ENCODE measurements at regions of chr15 and their contacts with region 1.

Region 1: GRCh38 chr15:89613031-89613430 is 37.8 kb downstream of the TICRR start:
- DNase-seq: no peak
- CTCF ChIP-seq: no peak

Region 2: DNA sequence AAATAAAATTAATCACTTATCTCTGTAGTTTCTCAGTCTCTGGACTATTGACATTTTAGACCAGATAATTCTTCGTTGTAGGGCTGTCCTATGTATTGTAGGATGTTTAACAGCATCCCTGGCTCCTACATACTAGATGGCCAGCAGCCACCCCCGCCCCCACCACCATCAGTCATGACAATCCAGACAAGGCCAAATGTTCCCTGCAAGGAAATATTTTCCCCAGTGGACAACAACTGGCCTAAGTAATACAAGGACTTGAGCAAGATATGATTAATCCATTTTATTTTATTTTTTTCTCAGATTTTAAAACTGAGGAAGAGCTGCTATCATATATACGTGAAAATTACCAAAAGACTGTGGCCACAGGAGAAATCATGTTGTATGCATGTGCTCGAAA is 14.0 kb before region 1 on chr15:
- CTCF ChIA-PET with region 1: interaction called, 22 read pairs
- POLR2A ChIA-PET with region 1: no interaction called
- DNase-seq: no peak
- CTCF ChIP-seq: no peak

Region 3: DNA sequence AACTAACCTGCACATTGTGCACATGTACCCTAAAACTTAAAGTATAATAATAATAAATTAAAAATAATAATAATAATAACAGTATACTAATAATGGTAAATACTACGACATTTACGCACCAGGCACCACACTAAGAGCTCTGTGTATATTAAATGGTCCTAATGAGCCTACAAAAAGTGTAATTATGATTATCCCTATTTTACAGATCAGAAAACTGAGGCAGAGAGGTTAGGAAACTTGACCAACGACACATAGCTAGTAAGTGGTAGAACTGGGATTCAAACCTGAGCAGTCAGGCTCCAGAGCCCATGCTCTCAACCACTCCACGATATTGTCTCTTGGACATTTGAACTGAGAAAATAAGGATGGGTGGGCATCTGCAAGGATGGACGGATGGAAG is 27.2 kb after region 1 on chr15:
- CTCF ChIA-PET with region 1: no interaction called
- POLR2A ChIA-PET with region 1: no interaction called
- DNase-seq: no peak
- CTCF ChIP-seq: no peak